A549 (cell line): ENCODE measurements at regions of chr15 and their contacts with region 1.

Region 1: GRCh38 chr15:40338041-40338657 is 2.6 kb downstream of the CCDC9B start:
- DNase-seq: peak; percentile 66 to 72
- ATAC-seq: peak; percentile 41 to 69; a peak in 4 of 6 replicates
- H3K4me3 ChIP-seq: 0 out of 3 replicates have a peak overlapping the region, but pooled peaks have one; percentile 47
- H3K27ac ChIP-seq: peak overlapping the region; percentile 94 to 96
- H3K4me1 ChIP-seq: peaks cover 39% of the 10 kb centered on the region
- CTCF ChIP-seq: peak; percentile 68
- EP300 ChIP-seq: no peak
- POLR2A ChIP-seq: no peak
- RAD21 ChIP-seq: peak; percentile 53 to 59

Region 2: DNA sequence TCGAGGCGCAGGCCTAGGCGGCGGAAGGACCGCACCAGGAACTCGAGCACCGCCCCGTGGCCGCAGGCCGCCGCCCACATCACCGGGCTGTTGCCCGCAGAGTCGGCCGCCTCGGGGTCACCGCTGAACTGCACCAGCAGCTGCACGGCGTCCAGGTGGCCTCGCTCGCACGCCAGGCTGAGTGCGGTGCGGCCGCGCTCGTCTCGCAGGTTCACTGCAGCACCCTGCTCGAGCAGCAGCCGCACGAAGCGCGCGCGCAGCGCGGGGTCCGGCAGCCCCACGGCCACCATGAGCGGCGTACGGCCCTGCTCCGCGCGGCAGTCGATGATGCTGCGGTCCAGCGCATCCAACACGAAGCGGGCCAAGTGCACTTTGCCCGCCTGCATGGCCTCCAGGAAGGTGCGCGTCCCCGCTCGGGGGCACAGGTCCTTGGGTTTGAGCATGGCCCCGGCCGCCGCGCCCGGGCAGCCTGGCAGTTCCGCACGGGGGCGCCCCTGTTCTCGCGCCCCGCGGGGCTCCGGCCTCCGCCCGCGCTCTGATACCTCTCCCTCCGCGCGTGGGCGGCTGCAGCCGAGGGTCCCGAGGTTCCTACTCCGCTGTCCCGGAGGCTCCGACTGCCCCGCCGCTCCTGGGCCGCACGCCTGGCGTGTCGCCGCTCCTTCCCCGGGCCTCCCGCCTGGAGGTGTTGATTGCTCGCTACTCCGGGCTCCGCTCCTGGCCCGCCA is 55.8 kb before region 1 on chr15:
- CTCF ChIA-PET with region 1: interaction called, 59 read pairs
- POLR2A ChIA-PET with region 1: interaction called, 3 read pairs
- DNase-seq: peak; percentile 63 to 64
- ATAC-seq: peak; percentile 63 to 81
- H3K4me3 ChIP-seq: peak overlapping the region; percentile 65
- H3K27ac ChIP-seq: peak overlapping the region; percentile 72 to 86
- H3K4me1 ChIP-seq: peaks cover 5% of the 10 kb centered on the region; the same call in 1 of the 3 replicates
- CTCF ChIP-seq: peak; percentile 62
- EP300 ChIP-seq: no peak
- POLR2A ChIP-seq: peak; percentile 17
- RAD21 ChIP-seq: no peak

Region 3: DNA sequence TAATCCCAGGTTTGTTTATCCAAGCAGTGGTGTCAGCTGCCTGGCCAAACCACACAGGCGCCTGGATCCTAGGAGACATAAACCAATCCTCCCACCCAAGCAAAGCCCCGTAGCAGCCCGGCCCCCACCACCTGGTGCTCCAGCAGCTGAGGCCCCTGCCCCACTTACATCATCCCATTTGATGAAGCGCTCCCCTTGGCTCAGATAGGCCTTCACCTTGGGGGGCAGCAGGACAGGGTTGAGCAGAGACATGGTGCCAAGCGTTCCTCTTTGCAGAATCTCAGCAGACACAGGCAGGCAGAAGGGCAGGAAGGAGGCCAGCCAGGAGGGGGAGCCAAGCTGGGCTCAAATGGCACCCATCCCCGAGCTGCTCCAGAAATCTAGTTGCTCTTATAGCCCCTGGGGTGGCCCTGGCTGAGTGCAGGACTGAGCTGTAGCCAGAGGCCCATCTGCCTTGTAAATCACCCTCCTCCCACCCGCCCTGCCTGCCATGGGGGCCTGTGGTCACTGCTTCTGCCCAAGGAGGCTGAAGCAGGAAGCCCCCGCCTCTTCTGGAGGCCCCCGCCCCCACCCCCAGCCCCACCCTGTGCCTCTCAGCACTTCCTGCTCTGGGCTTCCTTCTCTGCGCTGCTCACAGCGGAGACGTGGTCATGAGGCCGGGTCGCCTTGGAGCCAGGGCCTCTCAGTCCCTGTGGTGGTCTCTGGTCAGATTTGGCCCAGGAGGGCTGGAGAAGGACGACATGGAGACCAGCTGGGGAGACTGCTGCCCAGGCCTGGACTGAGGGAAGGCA is 30.5 kb before region 1 on chr15 and contains the start of gene PLCB2:
- CTCF ChIA-PET with region 1: interaction called, 10 read pairs
- POLR2A ChIA-PET with region 1: no interaction called
- DNase-seq: peak in 1 of 2 experiments; percentile 23
- ATAC-seq: peak; percentile 42 to 70; a peak in 4 of 6 replicates
- H3K4me3 ChIP-seq: no peak within 1 kb of the TSS
- H3K27ac ChIP-seq: no peak within 1 kb of the TSS
- H3K4me1 ChIP-seq: no peaks in the 10 kb centered on the region
- CTCF ChIP-seq: no peak
- EP300 ChIP-seq: no peak
- POLR2A ChIP-seq: no peak
- RAD21 ChIP-seq: no peak
- polyA plus RNA-seq, gene PLCB2: 0.19 and 0.30 TPM in 2 replicates

Region 4: GRCh38 chr15:40357723-40358470 is 19.7 kb after region 1 on chr15 and contains the start of gene DISP2:
- CTCF ChIA-PET with region 1: interaction called, 135 read pairs
- POLR2A ChIA-PET with region 1: no interaction called
- DNase-seq: peak; percentile 69 to 83
- ATAC-seq: peak; percentile 79 to 89
- H3K4me3 ChIP-seq: peak within 1 kb of the TSS; percentile 57
- H3K27ac ChIP-seq: peak within 1 kb of the TSS in 1 of 2 experiments; percentile 77; a peak in 2 of 6 replicates
- H3K4me1 ChIP-seq: peaks cover 6% of the 10 kb centered on the region; the same call in 1 of the 3 replicates
- CTCF ChIP-seq: no peak
- EP300 ChIP-seq: no peak
- POLR2A ChIP-seq: no peak
- RAD21 ChIP-seq: no peak
- polyA plus RNA-seq, gene DISP2: 0.26 and 0.52 TPM in 2 replicates

Region 5: GRCh38 chr15:40421246-40422157 is 83.4 kb after region 1 on chr15:
- CTCF ChIA-PET with region 1: interaction called, 49 read pairs
- POLR2A ChIA-PET with region 1: no interaction called
- DNase-seq: peak; percentile 55 to 63
- ATAC-seq: peak; percentile 97
- H3K4me3 ChIP-seq: no peak overlapping the region
- H3K27ac ChIP-seq: no peak overlapping the region
- H3K4me1 ChIP-seq: peaks cover 4% of the 10 kb centered on the region; the same call in 2 of the 3 replicates
- CTCF ChIP-seq: peak; percentile 68
- EP300 ChIP-seq: no peak
- POLR2A ChIP-seq: no peak
- RAD21 ChIP-seq: peak; percentile 81 to 85